A673 (cell line): ENCODE measurements at regions of chr7 and their contacts with region 1.

Region 1: GRCh38 chr7:67947651-67948050 is 951.0 kb downstream of the TYW1 start:
- DNase-seq: no peak
- H3K4me3 ChIP-seq: no peak overlapping the region
- H3K27ac ChIP-seq: no peak overlapping the region
- H3K4me1 ChIP-seq: peaks cover 18% of the 10 kb centered on the region
- H3K27me3 ChIP-seq: no peaks in the 10 kb centered on the region
- CTCF ChIP-seq: no peak

Region 2: DNA sequence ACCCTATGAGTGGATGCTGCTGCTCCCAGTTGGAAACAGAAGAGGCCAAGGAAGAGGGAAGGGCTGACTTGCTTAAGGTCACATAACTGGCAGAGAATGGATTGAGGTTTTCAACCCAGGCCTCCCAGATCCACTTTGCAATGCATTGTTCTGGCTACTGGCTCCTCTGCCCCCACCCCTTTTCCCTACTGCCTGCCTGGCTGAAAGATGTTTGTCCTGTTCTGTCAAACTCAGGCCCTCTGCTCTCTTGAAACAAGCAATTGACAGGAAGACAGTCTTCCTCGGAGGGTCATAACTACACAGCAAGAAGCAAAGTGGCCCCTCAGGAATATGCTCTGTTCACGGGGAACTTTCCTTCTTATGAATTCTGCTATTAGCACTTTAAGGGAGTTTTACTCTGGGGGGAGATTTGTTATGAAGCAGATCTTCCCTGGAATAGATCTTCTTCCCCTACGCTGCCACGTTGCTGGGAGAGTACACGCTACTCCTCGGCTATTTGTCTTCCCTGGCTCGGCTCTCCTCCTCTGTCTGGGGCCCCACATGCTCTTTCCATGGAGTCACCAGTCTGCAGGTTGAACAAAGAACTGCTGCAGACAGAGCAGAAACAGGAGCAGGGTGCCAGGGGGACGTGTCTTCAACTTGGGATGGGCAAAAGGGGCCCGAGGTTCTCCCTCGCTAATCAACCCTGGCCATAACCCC is 515.0 kb before region 1 on chr7:
- CTCF ChIA-PET with region 1: no interaction called
- POLR2A ChIA-PET with region 1: interaction called, 12 read pairs
- intact Hi-C with region 1: no loop called
- DNase-seq: no peak
- H3K4me3 ChIP-seq: no peak overlapping the region
- H3K27ac ChIP-seq: no peak overlapping the region
- H3K4me1 ChIP-seq: peaks cover 10% of the 10 kb centered on the region
- H3K27me3 ChIP-seq: no peaks in the 10 kb centered on the region
- CTCF ChIP-seq: no peak

Region 3: DNA sequence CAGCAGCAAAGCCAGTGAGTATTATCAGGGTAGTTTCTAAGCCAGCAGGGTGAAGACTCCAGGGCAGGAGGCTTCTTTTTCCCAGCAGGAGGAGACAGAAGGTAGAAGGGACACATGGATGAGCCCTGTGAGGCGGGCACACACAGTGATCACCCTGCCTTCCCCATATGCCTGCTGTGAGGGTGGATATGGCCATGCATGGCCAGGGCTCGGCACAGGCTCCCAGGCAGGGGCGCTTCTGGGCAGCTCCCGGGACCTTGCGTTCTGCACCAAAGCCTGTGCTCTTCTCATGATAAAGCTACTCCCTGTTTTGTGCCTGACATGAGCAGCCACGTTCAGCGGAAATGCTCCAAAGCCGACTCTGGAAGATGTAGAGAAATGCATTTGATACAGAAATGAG is 143.9 kb before region 1 on chr7:
- CTCF ChIA-PET with region 1: no interaction called
- POLR2A ChIA-PET with region 1: no interaction called
- intact Hi-C with region 1: no loop called
- DNase-seq: no peak
- H3K4me3 ChIP-seq: no peak overlapping the region
- H3K27ac ChIP-seq: no peak overlapping the region
- H3K4me1 ChIP-seq: no peaks in the 10 kb centered on the region
- H3K27me3 ChIP-seq: no peaks in the 10 kb centered on the region
- CTCF ChIP-seq: no peak

Region 4: GRCh38 chr7:68407460-68407859 is 459.8 kb after region 1 on chr7:
- CTCF ChIA-PET with region 1: no interaction called
- POLR2A ChIA-PET with region 1: no interaction called
- intact Hi-C with region 1: no loop called
- DNase-seq: no peak
- H3K4me3 ChIP-seq: no peak overlapping the region
- H3K27ac ChIP-seq: no peak overlapping the region
- H3K4me1 ChIP-seq: no peaks in the 10 kb centered on the region
- H3K27me3 ChIP-seq: no peaks in the 10 kb centered on the region
- CTCF ChIP-seq: no peak

Region 5: DNA sequence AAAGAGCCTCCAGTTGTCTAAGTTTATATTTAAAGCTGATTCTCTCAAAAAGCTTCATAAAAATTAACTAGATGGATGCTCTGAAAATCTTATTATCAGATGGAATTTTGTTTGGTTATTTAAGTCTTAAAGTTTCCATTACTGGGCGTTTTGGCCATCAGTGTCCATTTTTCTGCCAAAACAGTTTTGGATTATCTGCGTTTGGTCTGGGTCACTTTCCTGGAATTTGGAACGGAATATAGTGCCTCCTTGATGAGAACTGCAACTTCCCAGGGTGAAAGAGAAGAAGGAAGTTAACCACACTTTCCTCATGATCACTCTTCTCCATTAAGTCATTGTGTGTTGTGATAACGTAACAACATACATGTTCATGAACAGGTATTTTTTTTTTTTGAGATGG is 885.8 kb after region 1 on chr7:
- CTCF ChIA-PET with region 1: no interaction called
- POLR2A ChIA-PET with region 1: no interaction called
- intact Hi-C with region 1: no loop called
- DNase-seq: no peak
- H3K4me3 ChIP-seq: no peak overlapping the region
- H3K27ac ChIP-seq: no peak overlapping the region
- H3K4me1 ChIP-seq: no peaks in the 10 kb centered on the region
- H3K27me3 ChIP-seq: no peaks in the 10 kb centered on the region
- CTCF ChIP-seq: no peak